ENCODE measurements at regions of chr1 and their contacts with region 1.

Region 1: GRCh38 chr1:16946646-16947045 is 24.9 kb downstream of the CROCC start:
- DNase-seq: peak in 1 of 10 donors; percentile 83

Region 2: DNA sequence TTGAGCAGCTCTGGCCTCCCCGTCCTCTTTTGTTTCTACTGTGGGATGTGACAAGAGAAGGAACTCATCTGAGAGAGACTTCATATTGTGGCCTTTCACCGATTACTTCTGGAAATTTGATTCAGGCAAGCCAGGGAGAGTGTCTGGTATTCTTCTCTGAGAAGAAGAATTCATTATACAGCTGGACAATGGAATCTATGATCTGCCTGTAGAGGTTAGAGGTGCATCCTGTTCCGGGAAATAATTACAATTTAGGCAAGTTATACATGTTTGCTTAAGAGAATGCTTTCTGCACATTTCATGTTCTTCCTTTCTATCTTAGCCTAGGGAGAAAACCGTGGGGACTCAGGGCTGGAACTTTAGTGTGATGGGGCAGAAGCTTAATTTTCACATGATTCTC is 63.6 kb before region 1 on chr1:
- intact Hi-C with region 1: no loop called
- DNase-seq: no peak

Region 3: DNA sequence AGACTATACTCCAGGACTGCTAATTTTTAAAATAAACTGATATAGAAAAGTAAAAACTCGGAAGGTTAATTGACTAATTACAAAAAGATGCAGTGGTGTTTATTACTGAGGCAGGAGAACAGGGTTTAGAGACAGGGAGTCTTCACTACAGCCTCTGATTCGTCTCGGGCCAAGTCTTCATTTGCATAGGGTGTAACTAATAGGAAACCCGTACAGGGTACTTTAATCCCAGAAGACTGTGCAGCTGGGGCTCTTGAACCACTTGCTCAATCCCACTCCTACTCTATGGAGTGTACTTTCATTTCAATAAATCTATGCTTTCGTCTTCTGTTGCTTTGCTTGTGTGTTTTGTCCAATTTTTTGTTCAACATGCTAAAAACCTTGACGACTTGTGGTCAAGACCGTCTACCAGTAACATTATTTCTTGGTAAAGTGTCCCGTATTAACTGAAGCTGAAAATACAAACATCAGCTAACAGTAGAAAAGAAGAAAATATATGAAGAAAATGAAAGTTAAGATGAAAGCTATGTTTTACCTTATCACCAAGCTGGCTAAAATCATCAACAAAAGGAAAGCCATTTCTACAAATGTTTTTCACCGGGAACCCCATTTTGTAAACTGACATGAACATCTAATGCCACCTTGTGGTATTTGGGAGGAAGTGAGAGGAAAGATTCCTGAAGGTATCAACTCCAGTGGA is 99.1 kb after region 1 on chr1:
- intact Hi-C with region 1: loop called (anchors 2 kb)
- DNase-seq: no peak